Activated CD4-positive, alpha-beta T cell treated with anti-CD3 and anti-CD28 coated beads, Interleukin-2, amount 10 ng/mL, durations not matched to agents 24 days and 14 days (primary cell): ENCODE measurements at regions of chr6 and their contacts with region 1.

Region 1: DNA sequence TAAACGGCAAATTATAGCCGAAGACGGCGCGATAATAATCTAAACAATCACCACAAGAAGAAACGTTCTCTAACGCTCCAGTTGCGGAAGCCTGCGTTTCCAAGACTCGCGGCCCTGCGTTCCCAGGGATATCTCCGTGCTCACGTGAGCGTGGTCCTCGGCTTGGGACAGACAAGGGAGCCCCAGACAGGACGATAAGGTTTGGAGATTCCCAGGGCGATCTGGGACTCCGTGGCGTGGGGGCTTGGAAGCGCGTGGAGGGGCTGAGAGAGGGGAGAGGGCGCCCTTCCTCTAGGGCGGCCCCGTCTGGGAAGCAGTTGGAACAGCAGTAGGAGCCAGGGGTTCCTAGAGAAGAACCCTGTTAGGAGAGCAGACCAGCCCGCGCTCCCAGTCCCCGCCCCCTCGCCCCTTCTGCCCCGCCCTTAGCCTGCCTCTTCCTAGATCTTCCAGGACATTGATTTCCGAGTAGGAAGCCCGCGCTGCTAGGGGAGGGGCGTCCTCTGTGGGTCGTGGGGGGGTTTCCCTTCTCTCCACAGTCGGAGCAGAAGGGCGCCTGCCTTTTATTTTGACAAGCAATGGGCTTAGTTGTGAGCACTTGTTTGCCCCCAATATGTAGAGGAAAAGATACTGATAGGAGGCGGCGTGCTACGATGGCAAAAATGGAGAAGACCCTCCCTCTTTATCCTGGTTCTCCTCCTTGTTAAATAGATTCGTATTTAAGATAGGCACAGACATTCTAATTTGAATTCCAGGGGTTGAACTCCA is 10.6 kb downstream of the NRN1 start:
- DNase-seq: peak; percentile 72
- H3K4me3 Mint-ChIP-seq: peak overlapping the region; percentile 88
- H3K27ac Mint-ChIP-seq: peak overlapping the region; percentile 45
- H3K4me1 Mint-ChIP-seq: peaks cover 45% of the 10 kb centered on the region
- H3K27me3 Mint-ChIP-seq: peaks cover 85% of the 10 kb centered on the region

Region 2: GRCh38 chr6:5981126-5982026 is 14.8 kb before region 1 on chr6:
- intact Hi-C with region 1: loop called (anchors 2 kb)
- DNase-seq: peak; percentile 63
- H3K4me3 Mint-ChIP-seq: no peak overlapping the region
- H3K27ac Mint-ChIP-seq: peak overlapping the region; percentile 21
- H3K4me1 Mint-ChIP-seq: peaks cover 40% of the 10 kb centered on the region
- H3K27me3 Mint-ChIP-seq: peaks cover 14% of the 10 kb centered on the region

Region 3: DNA sequence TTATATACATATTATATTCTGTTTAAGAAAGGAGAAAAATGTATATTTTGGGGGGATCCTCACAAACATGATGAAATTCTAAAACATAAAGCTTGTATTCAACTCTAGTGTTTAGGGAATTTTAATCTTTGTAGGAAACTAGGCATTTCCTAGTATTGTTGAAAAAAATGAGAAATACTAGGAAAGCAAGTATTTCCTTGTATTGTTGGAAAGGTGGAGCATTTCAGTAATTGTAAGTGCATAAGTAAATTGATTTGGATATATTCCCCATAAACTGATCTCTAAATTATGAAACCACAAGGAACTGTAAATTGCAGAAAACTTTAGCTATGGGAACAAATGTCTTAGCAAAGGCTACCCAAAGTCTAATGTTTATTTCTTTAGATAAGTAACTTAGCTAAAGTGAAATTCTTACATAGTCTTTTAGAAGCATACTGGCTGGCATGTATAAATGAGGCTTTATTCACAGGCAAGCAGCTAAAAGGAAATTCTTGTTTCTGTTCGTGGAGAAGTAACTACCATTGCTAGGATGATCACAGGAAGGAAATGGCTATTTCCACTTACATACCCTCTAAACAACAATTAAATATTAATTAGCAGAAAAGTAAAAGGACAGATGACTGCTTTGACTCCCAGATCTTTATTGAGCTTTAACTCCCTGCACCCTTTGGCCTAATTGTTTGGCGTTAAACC is 30.5 kb after region 1 on chr6:
- intact Hi-C with region 1: no loop called
- DNase-seq: no peak
- H3K4me3 Mint-ChIP-seq: no peak overlapping the region
- H3K27ac Mint-ChIP-seq: no peak overlapping the region
- H3K4me1 Mint-ChIP-seq: no peaks in the 10 kb centered on the region
- H3K27me3 Mint-ChIP-seq: peaks cover 9% of the 10 kb centered on the region